ENCODE measurements at regions of chr1 and their contacts with region 1.

Region 1: GRCh38 chr1:84668185-84668584 is 22.1 kb downstream of the SSX2IP start:
- DNase-seq: peak; percentile 18
- ATAC-seq: no peak
- H3K4me3 ChIP-seq: no peak overlapping the region
- H3K4me3 Mint-ChIP-seq: no peak overlapping the region
- H3K27ac ChIP-seq: no peak overlapping the region
- H3K27ac Mint-ChIP-seq: no peak overlapping the region
- H3K4me1 ChIP-seq: no peaks in the 10 kb centered on the region
- H3K4me1 Mint-ChIP-seq: no peaks in the 10 kb centered on the region
- H3K27me3 ChIP-seq: no peaks in the 10 kb centered on the region
- H3K27me3 Mint-ChIP-seq: no peaks in the 10 kb centered on the region
- CTCF ChIP-seq: no peak

Region 2: DNA sequence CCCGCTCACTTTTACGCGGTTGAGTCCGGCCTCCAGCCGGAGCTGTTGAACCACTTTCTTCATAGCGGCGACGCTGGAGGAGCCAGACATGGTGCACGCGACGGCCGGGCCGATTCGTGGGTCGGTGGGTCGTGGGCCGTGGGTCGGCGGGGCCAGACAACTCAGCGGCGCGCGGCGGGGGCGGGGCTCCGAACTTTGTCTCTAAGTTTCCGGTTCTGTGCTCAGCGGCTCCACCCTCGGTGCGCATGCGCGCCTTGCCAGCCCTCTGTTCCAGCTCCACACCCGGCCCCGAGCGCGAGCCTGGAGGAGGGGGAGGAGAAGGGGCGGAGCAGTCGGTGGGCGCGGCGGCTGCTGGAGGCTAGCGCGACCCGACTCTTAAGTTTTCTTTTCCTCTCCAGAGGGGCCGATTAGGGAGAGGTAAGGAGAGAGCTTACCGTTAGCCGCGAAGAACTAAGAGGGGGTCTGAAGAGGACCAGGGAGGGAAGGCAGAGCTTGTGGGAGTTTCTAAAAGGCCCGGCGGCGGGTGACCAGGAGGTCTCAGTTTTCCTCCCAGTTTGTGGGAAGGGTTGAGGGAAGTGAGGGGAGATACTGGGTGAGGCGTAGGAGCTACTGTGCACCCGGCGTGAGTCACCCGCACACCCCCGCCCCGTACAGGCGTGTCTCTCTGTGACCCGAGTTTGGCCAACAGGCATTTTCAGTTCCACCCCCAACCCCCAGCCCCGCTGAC is 162.0 kb before region 1 on chr1 and contains the starts of genes GNG5 and SPATA1:
- CTCF ChIA-PET with region 1: no interaction called
- POLR2A ChIA-PET with region 1: no interaction called
- intact Hi-C with region 1: no loop called
- DNase-seq: peak; percentile 98
- ATAC-seq: peak; percentile 88
- H3K4me3 ChIP-seq: peak within 1 kb of the TSS; percentile 82 to 98 (median 90)
- H3K4me3 Mint-ChIP-seq: peak within 1 kb of the TSS; percentile 95
- H3K27ac ChIP-seq: peak within 1 kb of the TSS; percentile 82 to 89
- H3K27ac Mint-ChIP-seq: peak within 1 kb of the TSS; percentile 98
- H3K4me1 ChIP-seq: peaks cover 23 to 27% of the 10 kb centered on the region in 2 donors
- H3K4me1 Mint-ChIP-seq: peaks cover 35% of the 10 kb centered on the region
- H3K27me3 ChIP-seq: no peaks in the 10 kb centered on the region
- H3K27me3 Mint-ChIP-seq: no peaks in the 10 kb centered on the region
- CTCF ChIP-seq: no peak
- total RNA-seq, gene GNG5: 36.0 and 41.6 TPM in 2 replicates
- total RNA-seq, gene SPATA1: 6.4 and 8.6 TPM in 2 replicates

Region 3: DNA sequence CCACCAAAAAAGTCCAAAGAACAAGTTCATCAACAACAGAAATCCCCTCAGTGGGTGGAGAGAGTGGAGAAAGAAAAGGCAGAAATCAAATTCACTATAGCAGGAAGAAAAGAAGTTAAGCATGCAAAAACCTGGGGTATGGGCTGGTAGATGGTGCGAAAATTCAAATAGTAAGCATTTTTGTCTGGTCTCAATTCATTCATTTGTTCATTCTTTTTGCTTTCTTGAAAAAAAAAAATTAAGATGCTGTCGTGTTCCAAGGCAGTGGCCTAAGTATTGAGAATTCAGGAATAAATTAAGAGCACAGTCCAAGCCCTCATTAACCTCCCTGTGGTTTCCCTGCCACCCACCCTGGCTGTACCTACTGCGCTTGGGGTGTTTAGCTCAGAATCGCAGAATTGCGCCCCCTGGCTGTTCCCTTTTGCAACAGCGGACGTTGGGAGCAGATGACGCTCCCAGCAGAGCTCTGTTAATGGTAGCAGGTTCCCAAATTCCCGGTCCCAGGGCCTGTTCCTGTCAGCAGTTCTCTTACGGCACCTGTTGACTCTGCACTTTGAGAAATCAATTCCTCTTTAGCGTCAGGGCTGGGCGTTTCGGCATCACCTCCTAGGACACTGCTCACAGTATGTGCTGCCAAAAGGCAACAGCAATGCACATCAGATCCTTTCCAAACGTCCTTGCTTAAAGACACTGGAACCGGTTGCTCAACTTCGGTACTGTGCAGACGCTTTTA is 56.1 kb after region 1 on chr1:
- CTCF ChIA-PET with region 1: interaction called, 21 read pairs
- POLR2A ChIA-PET with region 1: no interaction called
- intact Hi-C with region 1: loop called (anchors 1 kb)
- DNase-seq: peak; percentile 52
- ATAC-seq: peak; percentile 24
- H3K4me3 ChIP-seq: no peak overlapping the region
- H3K4me3 Mint-ChIP-seq: no peak overlapping the region
- H3K27ac ChIP-seq: no peak overlapping the region
- H3K27ac Mint-ChIP-seq: no peak overlapping the region
- H3K4me1 ChIP-seq: no peaks in the 10 kb centered on the region
- H3K4me1 Mint-ChIP-seq: no peaks in the 10 kb centered on the region
- H3K27me3 ChIP-seq: peaks cover 0 to 4% (median 0%) of the 10 kb centered on the region in 4 experiments
- H3K27me3 Mint-ChIP-seq: peaks cover 9% of the 10 kb centered on the region
- CTCF ChIP-seq: peak; percentile 70

Region 4: DNA sequence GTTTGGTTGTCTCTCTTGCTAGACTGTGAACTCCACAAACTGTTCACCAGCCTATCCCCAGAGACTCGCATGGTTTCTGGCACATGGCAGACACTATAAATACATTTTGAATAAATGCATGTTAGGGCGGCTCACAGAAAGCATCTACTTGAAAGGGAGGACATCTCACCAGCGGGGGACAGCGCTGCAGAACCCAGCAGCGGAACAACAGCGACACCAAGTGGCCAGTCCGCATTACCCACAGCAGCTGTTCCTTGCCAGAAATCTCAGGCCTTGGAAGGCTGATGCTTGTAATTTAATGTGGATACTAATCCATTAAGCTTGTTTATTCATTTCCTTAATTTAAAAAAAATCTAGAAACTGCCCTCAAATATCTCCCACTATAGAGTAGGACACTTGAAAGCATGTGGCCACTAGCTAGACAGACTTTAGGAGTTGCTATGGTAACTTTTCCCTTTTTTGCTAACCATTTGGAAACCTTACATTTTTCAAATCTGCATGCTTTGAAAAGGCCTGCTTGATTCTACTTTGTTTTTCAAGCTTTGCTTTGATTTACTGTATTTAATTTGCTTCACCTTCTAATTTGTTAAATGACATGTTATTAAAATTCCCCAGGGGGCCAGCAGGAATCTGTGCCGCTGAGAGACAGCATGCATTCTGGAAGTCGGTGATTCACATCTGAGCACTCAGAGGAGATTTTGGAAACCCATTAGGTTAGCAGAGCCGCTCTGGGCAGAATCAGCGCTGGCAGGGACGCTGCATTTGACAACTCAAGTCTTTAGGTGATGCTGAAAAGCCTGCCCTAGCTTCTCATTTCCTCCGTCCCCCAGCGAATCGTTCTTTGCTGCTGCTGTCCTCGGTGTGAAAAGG is 85.6 kb after region 1 on chr1:
- CTCF ChIA-PET with region 1: interaction called, 15 read pairs
- POLR2A ChIA-PET with region 1: no interaction called
- intact Hi-C with region 1: loop called (anchors 2 kb)
- DNase-seq: peak; percentile 76
- ATAC-seq: peak; percentile 81
- H3K4me3 ChIP-seq: no peak overlapping the region
- H3K4me3 Mint-ChIP-seq: no peak overlapping the region
- H3K27ac ChIP-seq: no peak overlapping the region
- H3K27ac Mint-ChIP-seq: no peak overlapping the region
- H3K4me1 ChIP-seq: peaks cover 1 to 3% of the 10 kb centered on the region in 2 donors
- H3K4me1 Mint-ChIP-seq: peaks cover 3% of the 10 kb centered on the region
- H3K27me3 ChIP-seq: peaks cover 0 to 16% (median 5%) of the 10 kb centered on the region in 4 experiments
- H3K27me3 Mint-ChIP-seq: peaks cover 30% of the 10 kb centered on the region
- CTCF ChIP-seq: peak; percentile 95

Region 5: GRCh38 chr1:84957966-84958365 is 289.8 kb after region 1 on chr1:
- CTCF ChIA-PET with region 1: no interaction called
- POLR2A ChIA-PET with region 1: no interaction called
- intact Hi-C with region 1: no loop called
- DNase-seq: no peak
- ATAC-seq: no peak
- H3K4me3 ChIP-seq: no peak overlapping the region
- H3K4me3 Mint-ChIP-seq: no peak overlapping the region
- H3K27ac ChIP-seq: no peak overlapping the region
- H3K27ac Mint-ChIP-seq: no peak overlapping the region
- H3K4me1 ChIP-seq: no peaks in the 10 kb centered on the region
- H3K4me1 Mint-ChIP-seq: peaks cover 3% of the 10 kb centered on the region
- H3K27me3 ChIP-seq: no peaks in the 10 kb centered on the region
- H3K27me3 Mint-ChIP-seq: no peaks in the 10 kb centered on the region
- CTCF ChIP-seq: no peak

Measured in B cell (primary cell).